Activated CD8-positive, alpha-beta T cell treated with anti-CD3 and anti-CD28 coated beads for 36 hours (primary cell): ENCODE measurements at regions of chr7 and their contacts with region 1.

Region 1: GRCh38 chr7:23546897-23547572 is 15.3 kb upstream of the TRA2A start:
- DNase-seq: peak; percentile 87
- ATAC-seq: peak; percentile 93
- H3K4me3 Mint-ChIP-seq: no peak overlapping the region
- H3K27ac Mint-ChIP-seq: no peak overlapping the region
- H3K4me1 Mint-ChIP-seq: peaks cover 8% of the 10 kb centered on the region
- H3K27me3 Mint-ChIP-seq: no peaks in the 10 kb centered on the region
- CTCF ChIP-seq: peak; percentile 93

Region 2: DNA sequence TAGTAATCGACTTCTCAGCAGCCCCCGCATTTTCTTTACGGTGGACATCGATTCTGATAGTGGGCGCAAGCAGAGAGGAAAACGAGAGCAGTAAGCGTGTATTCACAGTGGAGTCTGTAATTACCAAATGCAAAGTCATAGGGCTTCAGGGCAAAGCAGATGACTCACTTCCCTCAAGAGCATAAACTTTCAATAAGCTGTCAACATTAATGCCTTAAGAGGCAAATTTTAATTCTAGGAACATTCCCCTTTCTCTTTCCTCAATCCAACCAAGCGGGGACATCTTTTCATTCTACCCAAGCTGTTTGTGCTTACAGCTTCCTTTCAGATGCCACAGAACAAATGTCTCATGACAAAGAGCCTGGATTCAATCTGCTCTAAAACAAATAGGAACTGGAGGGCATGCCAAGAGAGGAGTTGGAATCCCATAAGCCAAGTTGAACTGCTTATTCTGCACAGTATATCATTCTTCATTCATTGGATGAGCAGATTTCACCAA is 199.3 kb before region 1 on chr7:
- CTCF ChIA-PET with region 1: interaction called, 15 read pairs
- POLR2A ChIA-PET with region 1: no interaction called
- intact Hi-C with region 1: no loop called
- DNase-seq: peak; percentile 32
- ATAC-seq: peak; percentile 58
- H3K4me3 Mint-ChIP-seq: no peak overlapping the region
- H3K27ac Mint-ChIP-seq: peak overlapping the region; percentile 37
- H3K4me1 Mint-ChIP-seq: peaks cover 44% of the 10 kb centered on the region
- H3K27me3 Mint-ChIP-seq: no peaks in the 10 kb centered on the region
- CTCF ChIP-seq: no peak

Region 3: GRCh38 chr7:23431702-23432199 is 115.3 kb before region 1 on chr7:
- CTCF ChIA-PET with region 1: interaction called, 18 read pairs
- POLR2A ChIA-PET with region 1: no interaction called
- intact Hi-C with region 1: no loop called
- DNase-seq: no peak
- ATAC-seq: no peak
- H3K4me3 Mint-ChIP-seq: no peak overlapping the region
- H3K27ac Mint-ChIP-seq: no peak overlapping the region
- H3K4me1 Mint-ChIP-seq: peaks cover 8% of the 10 kb centered on the region
- H3K27me3 Mint-ChIP-seq: peaks cover 18% of the 10 kb centered on the region
- CTCF ChIP-seq: no peak

Region 4: GRCh38 chr7:23570592-23571200 is 23.7 kb after region 1 on chr7:
- CTCF ChIA-PET with region 1: interaction called, 13 read pairs
- POLR2A ChIA-PET with region 1: no interaction called
- intact Hi-C with region 1: no loop called
- DNase-seq: peak; percentile 82
- ATAC-seq: peak; percentile 87
- H3K4me3 Mint-ChIP-seq: no peak overlapping the region
- H3K27ac Mint-ChIP-seq: no peak overlapping the region
- H3K4me1 Mint-ChIP-seq: no peaks in the 10 kb centered on the region
- H3K27me3 Mint-ChIP-seq: peaks cover 16% of the 10 kb centered on the region
- CTCF ChIP-seq: peak; percentile 80

Region 5: DNA sequence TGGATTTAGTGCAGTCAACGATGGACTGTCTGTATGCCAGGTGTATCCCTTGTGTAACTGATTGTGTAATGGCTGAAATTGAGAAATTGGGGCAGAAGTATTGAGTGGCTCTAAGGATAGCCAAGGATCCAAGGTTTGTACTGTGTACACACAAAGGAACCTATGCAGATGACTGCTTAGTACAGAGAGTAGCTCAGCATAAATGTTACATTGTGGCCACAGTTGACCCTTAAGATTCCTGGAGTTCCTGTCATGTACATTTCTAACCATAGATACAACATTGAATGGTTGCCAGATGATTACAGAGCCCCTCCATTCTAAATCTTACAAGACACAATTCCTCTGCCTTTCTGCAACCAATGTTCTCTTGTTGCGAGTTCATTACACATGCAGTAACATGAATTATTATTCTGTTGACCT is 75.5 kb after region 1 on chr7:
- CTCF ChIA-PET with region 1: no interaction called
- POLR2A ChIA-PET with region 1: no interaction called
- intact Hi-C with region 1: no loop called
- DNase-seq: no peak
- ATAC-seq: no peak
- H3K4me3 Mint-ChIP-seq: no peak overlapping the region
- H3K27ac Mint-ChIP-seq: no peak overlapping the region
- H3K4me1 Mint-ChIP-seq: no peaks in the 10 kb centered on the region
- H3K27me3 Mint-ChIP-seq: no peaks in the 10 kb centered on the region
- CTCF ChIP-seq: no peak

Region 6: GRCh38 chr7:23696916-23697441 is 149.9 kb after region 1 on chr7:
- CTCF ChIA-PET with region 1: interaction called, 21 read pairs
- POLR2A ChIA-PET with region 1: no interaction called
- intact Hi-C with region 1: no loop called
- DNase-seq: peak; percentile 76
- ATAC-seq: peak; percentile 45
- H3K4me3 Mint-ChIP-seq: no peak overlapping the region
- H3K27ac Mint-ChIP-seq: no peak overlapping the region
- H3K4me1 Mint-ChIP-seq: no peaks in the 10 kb centered on the region
- H3K27me3 Mint-ChIP-seq: no peaks in the 10 kb centered on the region
- CTCF ChIP-seq: peak; percentile 63

Region 7: GRCh38 chr7:23717788-23718187 is 170.8 kb after region 1 on chr7:
- CTCF ChIA-PET with region 1: interaction called, 39 read pairs
- POLR2A ChIA-PET with region 1: no interaction called
- intact Hi-C with region 1: loop called (anchors 1 kb)
- DNase-seq: no peak
- ATAC-seq: no peak
- H3K4me3 Mint-ChIP-seq: no peak overlapping the region
- H3K27ac Mint-ChIP-seq: no peak overlapping the region
- H3K4me1 Mint-ChIP-seq: no peaks in the 10 kb centered on the region
- H3K27me3 Mint-ChIP-seq: no peaks in the 10 kb centered on the region
- CTCF ChIP-seq: no peak

Region 8: GRCh38 chr7:24025094-24025493 is 478.1 kb after region 1 on chr7:
- CTCF ChIA-PET with region 1: no interaction called
- POLR2A ChIA-PET with region 1: no interaction called
- intact Hi-C with region 1: no loop called
- DNase-seq: no peak
- ATAC-seq: no peak
- H3K4me3 Mint-ChIP-seq: no peak overlapping the region
- H3K27ac Mint-ChIP-seq: no peak overlapping the region
- H3K4me1 Mint-ChIP-seq: no peaks in the 10 kb centered on the region
- H3K27me3 Mint-ChIP-seq: peaks cover 6% of the 10 kb centered on the region
- CTCF ChIP-seq: no peak